ENCODE measurements at regions of chr2 and their contacts with region 1.

Region 1: GRCh38 chr2:8761529-8762164 is 75.8 kb downstream of the KIDINS220 start:
- DNase-seq: peak; percentile 36
- ATAC-seq: peak; percentile 37; the same call in 1 of the 3 replicates
- H3K4me3 ChIP-seq: no peak overlapping the region
- H3K27ac ChIP-seq: no peak overlapping the region
- H3K4me1 ChIP-seq: no peaks in the 10 kb centered on the region
- H3K27me3 ChIP-seq: no peaks in the 10 kb centered on the region
- CTCF ChIP-seq: peak; percentile 60
- EP300 ChIP-seq: no peak
- POLR2A ChIP-seq: no peak
- RAD21 ChIP-seq: peak; percentile 58

Region 2: GRCh38 chr2:8525582-8526402 is 235.9 kb before region 1 on chr2:
- CTCF ChIA-PET with region 1: interaction called, 3 read pairs
- POLR2A ChIA-PET with region 1: no interaction called
- in situ Hi-C with region 1: no loop called
- intact Hi-C with region 1: loop called (anchors 1 kb)
- DNase-seq: peak; percentile 92
- ATAC-seq: peak; percentile 96
- H3K4me3 ChIP-seq: peak overlapping the region; percentile 26 to 64 (median 42)
- H3K27ac ChIP-seq: no peak overlapping the region
- H3K4me1 ChIP-seq: peaks cover 38% of the 10 kb centered on the region
- H3K27me3 ChIP-seq: peaks cover 5 to 33% of the 10 kb centered on the region in 2 experiments; a peak in 4 of 5 replicates
- CTCF ChIP-seq: peak; percentile 97
- EP300 ChIP-seq: peak; percentile 11 to 67; a peak in 2 of 4 replicates
- POLR2A ChIP-seq: no peak
- RAD21 ChIP-seq: peak; percentile 99

Region 3: GRCh38 chr2:8693155-8693821 is 68.4 kb before region 1 on chr2:
- CTCF ChIA-PET with region 1: interaction called, 4 read pairs
- POLR2A ChIA-PET with region 1: no interaction called
- in situ Hi-C with region 1: no loop called
- intact Hi-C with region 1: loop called (anchors 1 kb)
- DNase-seq: peak; percentile 30
- ATAC-seq: peak; percentile 93
- H3K4me3 ChIP-seq: peak overlapping the region; percentile 16 to 61 (median 38); a peak in 4 of 6 replicates
- H3K27ac ChIP-seq: no peak overlapping the region
- H3K4me1 ChIP-seq: peaks cover 18% of the 10 kb centered on the region; the same call in 1 of the 2 replicates
- H3K27me3 ChIP-seq: peaks cover 0 to 28% of the 10 kb centered on the region in 2 experiments; a peak in 2 of 5 replicates
- CTCF ChIP-seq: peak; percentile 96
- EP300 ChIP-seq: no peak
- POLR2A ChIP-seq: no peak
- RAD21 ChIP-seq: peak; percentile 73

Measured in HepG2 (cell line).